Sciatic nerve (tissue), 2 donors: ENCODE measurements at regions of chr10 and their contacts with region 1.

Region 1: DNA sequence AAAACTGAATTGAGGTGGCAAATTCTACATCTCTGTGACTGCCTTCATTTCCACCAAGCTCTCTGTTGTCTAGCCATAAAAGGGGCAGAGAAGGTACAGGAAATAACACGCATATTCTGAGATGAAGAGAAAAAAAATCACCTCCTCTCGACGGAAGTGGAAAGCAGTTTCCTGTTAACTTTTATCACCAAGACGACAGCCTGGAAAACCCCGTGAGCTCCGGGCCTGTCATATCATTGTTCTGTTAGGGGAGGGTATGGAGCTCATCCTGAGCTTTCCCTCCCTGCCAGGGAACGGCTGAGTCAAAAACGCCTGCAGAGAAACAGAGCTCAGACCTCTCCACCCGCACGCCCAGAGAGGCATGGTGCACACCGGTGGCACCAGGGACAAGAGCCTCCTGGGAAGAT is 200.3 kb downstream of the PRPF18 start:
- DNase-seq: no peak
- ATAC-seq: peak; percentile 7

Region 2: GRCh38 chr10:13956826-13957225 is 169.8 kb after region 1 on chr10:
- intact Hi-C with region 1: loop called (anchors 5 kb)
- DNase-seq: peak; percentile 81
- ATAC-seq: peak; percentile 97

Region 3: DNA sequence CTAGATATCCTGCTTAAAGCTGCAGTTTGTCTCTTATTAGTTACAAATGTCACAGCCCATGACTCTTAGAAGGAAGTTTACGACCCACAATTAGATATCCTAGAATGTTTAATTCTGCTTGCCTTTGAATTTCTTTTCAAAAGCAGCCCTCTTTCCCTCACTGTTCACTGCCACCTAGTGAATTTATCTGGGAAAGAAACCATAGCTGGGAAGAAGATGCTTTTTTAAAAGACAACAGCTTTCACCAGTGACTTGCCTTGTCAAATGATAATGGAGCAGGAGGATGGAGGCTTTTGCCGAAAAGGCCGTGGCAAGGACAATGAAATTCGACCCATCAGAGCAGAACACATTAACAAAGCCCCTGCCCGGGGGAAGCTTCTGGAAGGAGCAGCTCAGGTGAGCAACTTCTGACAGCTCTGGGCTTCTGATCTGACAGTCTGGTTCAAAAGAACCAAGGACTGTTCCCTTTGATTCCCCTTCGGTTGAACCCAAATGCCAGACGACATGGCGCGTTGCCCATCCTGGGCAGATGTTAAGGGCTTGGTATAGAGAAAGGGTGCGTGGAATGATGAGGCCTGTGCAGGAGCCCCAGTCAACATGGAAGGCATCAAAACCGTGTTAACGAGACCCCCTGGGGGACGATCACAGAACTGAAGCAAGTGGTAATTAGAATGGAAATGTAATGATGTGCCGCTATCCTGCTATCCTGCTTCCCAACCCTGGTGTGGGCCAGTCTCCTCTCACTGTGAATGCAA is 306.9 kb after region 1 on chr10:
- intact Hi-C with region 1: loop called (anchors 5 kb)
- DNase-seq: no peak
- ATAC-seq: peak; percentile 74

Region 4: DNA sequence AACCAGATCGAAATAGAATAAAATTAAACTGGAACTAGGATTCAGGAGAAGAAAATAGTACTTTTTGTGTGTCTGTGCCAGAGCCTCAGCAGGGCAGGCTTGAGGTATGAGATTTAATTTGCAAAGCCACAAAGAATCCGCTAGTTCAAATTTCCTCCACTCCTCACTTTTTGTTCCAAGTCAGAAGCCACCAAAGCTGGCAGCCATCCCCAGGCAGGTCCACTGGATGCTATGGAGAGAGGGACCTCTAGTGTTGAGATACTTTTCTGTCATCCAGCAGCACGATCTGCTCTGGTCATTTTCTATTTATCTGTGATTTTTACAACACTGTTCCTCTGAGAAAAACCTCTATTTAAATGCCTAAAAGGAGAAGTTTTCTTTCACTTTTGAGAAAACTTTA is 691.6 kb after region 1 on chr10:
- intact Hi-C with region 1: no loop called
- DNase-seq: peak; percentile 80
- ATAC-seq: peak; percentile 87